Mammary epithelial cell (primary cell): ENCODE measurements at regions of chr5 and their contacts with region 1.

Region 1: GRCh38 chr5:100903039-100903887 is at the start of gene ST8SIA4:
- DNase-seq: peak; percentile 53
- H3K4me3 ChIP-seq: peak within 1 kb of the TSS; percentile 20 to 45 (median 23)
- H3K27ac ChIP-seq: no peak within 1 kb of the TSS
- H3K4me1 ChIP-seq: peaks cover 16% of the 10 kb centered on the region
- H3K27me3 ChIP-seq: peaks cover 25% of the 10 kb centered on the region
- CTCF ChIP-seq: no peak
- total RNA-seq, gene ST8SIA4: under 0.01 TPM in 1 of 2 donors, not detected in the other

Region 2: GRCh38 chr5:100623719-100624118 is 279.5 kb before region 1 on chr5:
- CTCF ChIA-PET with region 1: no interaction called
- dilution Hi-C with region 1: no loop called
- in situ Hi-C with region 1: no loop called
- intact Hi-C with region 1: loop called (anchors 5 kb)
- DNase-seq: peak; percentile 24
- H3K4me3 ChIP-seq: no peak overlapping the region
- H3K27ac ChIP-seq: no peak overlapping the region
- H3K4me1 ChIP-seq: no peaks in the 10 kb centered on the region
- H3K27me3 ChIP-seq: no peaks in the 10 kb centered on the region
- CTCF ChIP-seq: peak; percentile 44 to 68

Region 3: DNA sequence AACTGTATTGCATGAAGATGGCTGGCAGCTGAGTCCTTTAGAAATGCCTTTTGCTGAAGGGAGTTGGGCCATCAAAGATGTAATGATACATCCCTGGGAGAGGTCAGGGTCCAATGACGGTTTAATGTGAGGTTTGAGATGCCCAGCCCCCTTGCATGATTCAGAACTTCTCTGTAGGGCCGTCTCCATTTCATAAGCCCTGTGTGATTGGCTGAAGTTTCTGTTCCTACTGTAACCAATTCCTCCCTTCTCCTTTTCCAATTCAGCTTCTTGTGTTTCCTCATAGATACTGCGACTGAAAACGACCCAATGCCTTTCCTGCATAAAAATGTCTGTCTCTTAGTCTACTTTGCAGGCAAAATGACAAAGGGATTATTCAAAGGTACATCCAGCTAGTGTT is 47.7 kb after region 1 on chr5:
- CTCF ChIA-PET with region 1: no interaction called
- dilution Hi-C with region 1: no loop called
- in situ Hi-C with region 1: no loop called
- intact Hi-C with region 1: no loop called
- DNase-seq: no peak
- H3K4me3 ChIP-seq: no peak overlapping the region
- H3K27ac ChIP-seq: no peak overlapping the region
- H3K4me1 ChIP-seq: no peaks in the 10 kb centered on the region
- H3K27me3 ChIP-seq: no peaks in the 10 kb centered on the region
- CTCF ChIP-seq: no peak

Region 4: DNA sequence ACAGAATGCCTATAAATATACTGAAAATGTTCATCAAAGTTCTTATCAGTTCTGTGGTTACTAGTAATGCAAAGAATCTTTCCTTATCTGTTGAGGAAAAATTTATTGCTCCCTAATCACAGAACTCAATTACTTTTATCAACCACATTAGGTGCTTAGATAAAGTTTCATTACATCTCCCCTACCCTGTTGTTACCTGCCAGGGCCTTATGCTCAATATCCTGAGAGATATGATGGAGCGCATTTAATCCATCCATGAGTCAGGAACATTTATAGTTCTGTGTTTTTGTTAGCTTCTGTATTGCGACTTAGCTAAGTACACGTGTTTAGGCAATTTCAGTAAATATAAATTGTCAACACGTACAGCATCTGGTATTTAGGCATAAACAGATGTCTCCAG is 164.2 kb after region 1 on chr5:
- CTCF ChIA-PET with region 1: no interaction called
- dilution Hi-C with region 1: no loop called
- in situ Hi-C with region 1: no loop called
- intact Hi-C with region 1: no loop called
- DNase-seq: no peak
- H3K4me3 ChIP-seq: no peak overlapping the region
- H3K27ac ChIP-seq: no peak overlapping the region
- H3K4me1 ChIP-seq: no peaks in the 10 kb centered on the region
- H3K27me3 ChIP-seq: no peaks in the 10 kb centered on the region
- CTCF ChIP-seq: no peak